Mammary epithelial cell (primary cell): ENCODE measurements at regions of chr1 and their contacts with region 1.

Region 1: DNA sequence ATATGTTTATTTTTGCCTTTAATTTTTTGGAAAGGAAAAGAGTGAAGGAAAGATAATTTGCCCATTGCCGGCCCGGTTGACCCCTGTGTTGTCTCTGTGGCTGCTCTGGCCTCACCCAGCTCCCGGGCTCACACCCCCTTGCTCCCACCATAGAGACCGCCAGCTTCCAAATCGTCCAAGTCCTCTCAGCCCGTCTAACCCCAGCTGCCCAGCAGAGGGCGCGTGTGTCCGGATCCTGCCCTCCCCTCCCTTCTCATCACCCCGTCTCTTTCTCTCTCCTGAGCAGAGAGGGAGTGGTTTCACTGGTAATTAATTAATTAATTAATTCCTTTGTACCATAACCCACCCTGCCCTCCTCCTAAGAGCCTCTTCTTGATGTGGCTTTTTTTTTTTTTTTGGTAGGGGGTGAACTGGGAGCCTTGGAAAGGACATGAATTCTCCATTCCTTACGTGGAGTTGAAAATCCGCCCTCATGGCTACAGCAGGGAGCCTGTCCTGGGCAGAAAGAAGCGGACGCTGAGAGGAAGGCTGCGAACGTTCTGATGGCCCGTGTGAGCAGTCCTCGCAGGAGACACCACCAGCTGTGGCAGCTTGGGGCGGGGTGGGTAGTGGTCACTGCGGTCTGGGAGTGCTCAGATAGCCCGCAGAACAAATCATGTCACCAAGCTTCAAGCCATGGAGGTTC is 45.9 kb downstream of the KIAA0040 start:
- DNase-seq: peak; percentile 33
- H3K4me3 ChIP-seq: no peak overlapping the region
- H3K27ac ChIP-seq: no peak overlapping the region
- H3K4me1 ChIP-seq: peaks cover 19% of the 10 kb centered on the region
- H3K27me3 ChIP-seq: no peaks in the 10 kb centered on the region
- CTCF ChIP-seq: peak; percentile 82 to 95

Region 2: DNA sequence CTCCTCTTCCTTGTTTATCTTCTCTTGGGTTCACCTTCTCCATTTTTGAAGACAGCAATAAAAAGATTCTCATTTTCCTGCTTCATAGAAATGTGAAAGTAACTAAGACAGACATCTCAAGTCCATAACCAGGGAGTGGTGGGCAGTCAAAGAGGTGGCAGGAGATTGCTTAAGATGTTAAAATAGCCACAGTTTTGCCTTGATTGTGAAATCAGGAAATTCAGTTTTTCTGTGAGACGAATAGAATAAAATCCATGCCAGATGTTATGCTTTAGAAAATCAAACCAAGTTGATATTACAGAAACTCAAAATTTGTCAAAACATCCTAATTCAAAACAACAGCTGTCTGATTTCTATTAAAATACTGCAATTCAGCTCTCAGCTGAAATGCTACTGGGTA is 21.8 kb before region 1 on chr1:
- CTCF ChIA-PET with region 1: interaction called, 35 read pairs
- dilution Hi-C with region 1: no loop called
- in situ Hi-C with region 1: no loop called
- intact Hi-C with region 1: no loop called
- DNase-seq: no peak
- H3K4me3 ChIP-seq: no peak overlapping the region
- H3K27ac ChIP-seq: no peak overlapping the region
- H3K4me1 ChIP-seq: peaks cover 4% of the 10 kb centered on the region
- H3K27me3 ChIP-seq: no peaks in the 10 kb centered on the region
- CTCF ChIP-seq: no peak

Region 3: DNA sequence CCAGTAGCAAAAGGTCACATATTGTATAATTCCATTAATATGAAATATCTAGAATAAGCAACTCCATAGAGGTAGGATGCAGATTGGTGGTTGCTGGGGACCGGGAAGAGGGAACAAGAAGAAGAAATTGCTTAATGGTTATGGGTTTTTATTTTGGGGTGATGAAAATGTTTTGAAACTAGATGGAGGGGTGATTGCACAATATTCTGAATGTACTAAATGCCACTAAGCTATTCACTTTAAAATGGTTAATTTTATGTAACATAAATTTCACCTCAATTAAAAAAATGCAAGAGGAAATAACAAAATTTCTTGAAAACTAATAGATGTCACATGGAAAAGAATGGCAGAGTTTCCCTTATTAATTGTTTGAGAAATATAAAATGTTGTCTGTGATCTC is 39.3 kb after region 1 on chr1:
- CTCF ChIA-PET with region 1: no interaction called
- dilution Hi-C with region 1: no loop called
- in situ Hi-C with region 1: no loop called
- intact Hi-C with region 1: no loop called
- DNase-seq: no peak
- H3K4me3 ChIP-seq: no peak overlapping the region
- H3K27ac ChIP-seq: no peak overlapping the region
- H3K4me1 ChIP-seq: peaks cover 43% of the 10 kb centered on the region
- H3K27me3 ChIP-seq: no peaks in the 10 kb centered on the region
- CTCF ChIP-seq: no peak